ENCODE measurements at regions of chr2 and their contacts with region 1.

Region 1: DNA sequence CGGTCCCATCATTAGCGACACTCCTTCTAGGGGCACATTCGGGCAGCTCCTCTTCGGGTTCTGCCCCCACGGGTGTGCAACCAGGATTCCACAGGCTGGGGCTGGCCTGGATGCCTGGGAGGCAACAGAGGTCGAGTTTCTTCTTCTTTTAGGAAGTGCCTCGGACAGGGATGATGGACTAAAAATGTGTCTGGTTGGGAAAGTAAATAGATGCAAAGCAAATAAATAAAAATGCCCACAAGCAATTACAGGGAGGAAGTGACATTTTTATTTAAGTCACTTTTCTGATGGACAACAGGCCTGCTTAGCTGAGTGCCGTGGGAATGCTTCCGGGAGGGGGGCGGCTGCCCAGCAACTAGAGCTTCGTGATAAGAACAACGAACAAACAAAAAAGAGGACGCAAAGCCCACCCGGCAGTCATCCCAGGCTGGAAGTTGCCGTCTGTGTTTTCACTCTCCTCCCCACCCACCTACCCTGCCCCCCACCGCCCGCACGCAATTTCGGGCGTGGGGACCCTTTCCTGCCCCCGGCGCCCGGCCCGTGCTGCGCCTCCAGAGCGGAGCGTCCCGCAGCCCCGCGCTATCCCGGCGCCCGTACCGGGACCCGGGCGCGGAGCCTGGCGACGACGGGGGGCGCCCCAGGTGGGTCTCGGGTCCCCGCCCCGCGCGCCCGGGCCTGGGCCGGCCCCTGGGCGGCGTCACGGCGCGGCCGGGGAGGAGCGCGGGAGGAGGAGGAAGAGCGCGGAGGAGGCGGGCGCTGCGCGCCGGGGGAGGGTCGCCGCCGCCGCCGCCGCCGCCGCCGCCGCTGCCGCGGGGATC is 412 bp upstream of the NCK2 start:
- DNase-seq: peak; percentile 64
- ATAC-seq: peak; percentile 80
- H3K4me3 ChIP-seq: peak overlapping the region; percentile 55
- H3K27ac ChIP-seq: peak overlapping the region; percentile 40
- H3K4me1 ChIP-seq: peaks cover 18% of the 10 kb centered on the region
- H3K27me3 ChIP-seq: no peaks in the 10 kb centered on the region
- CTCF ChIP-seq: no peak

Region 2: GRCh38 chr2:105449076-105449475 is 295.2 kb before region 1 on chr2:
- CTCF ChIA-PET with region 1: no interaction called
- POLR2A ChIA-PET with region 1: no interaction called
- intact Hi-C with region 1: no loop called
- DNase-seq: peak; percentile 6
- ATAC-seq: peak; percentile 29
- H3K4me3 ChIP-seq: no peak overlapping the region
- H3K27ac ChIP-seq: no peak overlapping the region
- H3K4me1 ChIP-seq: peaks cover 42% of the 10 kb centered on the region
- H3K27me3 ChIP-seq: no peaks in the 10 kb centered on the region
- CTCF ChIP-seq: no peak

Region 3: GRCh38 chr2:105627534-105627933 is 116.8 kb before region 1 on chr2:
- CTCF ChIA-PET with region 1: no interaction called
- POLR2A ChIA-PET with region 1: no interaction called
- intact Hi-C with region 1: loop called (anchors 5 kb)
- DNase-seq: no peak
- ATAC-seq: no peak
- H3K4me3 ChIP-seq: no peak overlapping the region
- H3K27ac ChIP-seq: no peak overlapping the region
- H3K4me1 ChIP-seq: peaks cover 9% of the 10 kb centered on the region; the same call in 1 of the 2 replicates
- H3K27me3 ChIP-seq: peaks cover 14% of the 10 kb centered on the region; the same call in 1 of the 2 replicates
- CTCF ChIP-seq: no peak

Region 4: DNA sequence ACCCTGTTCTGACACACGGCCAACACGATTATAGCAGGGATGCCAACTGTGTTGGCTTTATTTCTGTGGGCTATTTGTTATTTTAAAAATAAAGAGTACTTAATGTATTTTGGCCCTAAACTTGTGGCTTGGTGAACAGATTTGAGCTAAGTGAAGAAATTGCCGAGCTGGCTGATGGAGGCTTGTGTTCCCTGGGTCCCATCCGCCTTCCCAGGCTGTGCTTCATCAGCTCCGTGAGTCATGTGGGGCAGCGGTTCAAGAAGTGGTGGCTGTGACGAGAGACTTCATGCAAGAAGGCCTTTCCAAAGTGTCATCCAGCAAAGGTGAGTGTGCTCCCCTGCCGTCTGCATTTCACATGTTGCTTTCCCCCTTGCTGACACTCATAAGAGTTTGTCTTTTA is 73.1 kb before region 1 on chr2:
- CTCF ChIA-PET with region 1: no interaction called
- POLR2A ChIA-PET with region 1: no interaction called
- intact Hi-C with region 1: no loop called
- DNase-seq: no peak
- ATAC-seq: no peak
- H3K4me3 ChIP-seq: no peak overlapping the region
- H3K27ac ChIP-seq: no peak overlapping the region
- H3K4me1 ChIP-seq: no peaks in the 10 kb centered on the region
- H3K27me3 ChIP-seq: no peaks in the 10 kb centered on the region; the same call in 1 of the 2 replicates
- CTCF ChIP-seq: no peak